GM13976 (cell line): ENCODE measurements at regions of chr19 and their contacts with region 1.

Region 1: GRCh38 chr19:29771708-29772414 is 39.9 kb upstream of the CCNE1 start:
- DNase-seq: peak; percentile 60
- CTCF ChIP-seq: peak; percentile 33

Region 2: GRCh38 chr19:30183807-30184490 is 412.1 kb after region 1 on chr19:
- in situ Hi-C with region 1: no loop called
- DNase-seq: no peak
- CTCF ChIP-seq: no peak

Region 3: GRCh38 chr19:30649934-30650614 is 878.2 kb after region 1 on chr19:
- in situ Hi-C with region 1: loop called (anchors 25 kb)
- DNase-seq: peak; percentile 74
- CTCF ChIP-seq: peak; percentile 66